HEK293 (cell line): ENCODE measurements at regions of chr10 and their contacts with region 1.

Region 1: DNA sequence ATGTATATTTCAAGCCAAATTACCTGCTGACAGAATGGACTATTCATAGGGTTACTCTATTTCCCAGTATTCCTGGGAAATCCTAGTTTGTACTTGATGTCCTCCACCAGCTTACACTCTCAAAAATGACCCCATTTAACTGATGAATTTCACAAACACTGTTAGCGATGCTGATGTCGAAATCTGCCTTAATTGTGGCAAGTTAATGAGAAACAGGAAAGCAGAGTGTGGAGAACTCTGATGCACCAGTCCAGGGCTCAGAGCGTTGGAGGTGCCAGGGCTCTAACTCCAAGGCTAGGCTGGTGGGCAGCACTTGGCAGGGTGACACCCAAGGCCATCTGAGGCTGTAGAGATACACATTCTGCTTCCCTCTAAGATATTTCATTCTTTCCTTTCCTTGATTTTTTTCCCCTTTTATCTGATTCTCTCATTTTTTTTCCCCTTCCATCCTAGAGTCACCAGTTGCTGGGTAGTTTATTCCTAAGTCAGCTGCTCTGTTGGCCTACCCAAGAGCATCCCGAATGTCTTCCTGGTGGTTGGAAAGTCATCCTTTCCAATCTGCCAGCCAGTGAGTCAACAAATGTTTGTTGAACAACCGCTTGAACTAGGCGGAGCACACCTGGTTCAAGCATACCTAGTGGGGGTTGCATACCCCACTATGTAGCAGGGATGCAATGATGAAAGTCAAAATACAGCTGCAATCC is 525.0 kb upstream of the NRP1 start:
- H3K4me3 ChIP-seq: no peak overlapping the region
- H3K27ac ChIP-seq: no peak overlapping the region
- H3K4me1 ChIP-seq: no peaks in the 10 kb centered on the region
- CTCF ChIP-seq: no peak

Region 2: DNA sequence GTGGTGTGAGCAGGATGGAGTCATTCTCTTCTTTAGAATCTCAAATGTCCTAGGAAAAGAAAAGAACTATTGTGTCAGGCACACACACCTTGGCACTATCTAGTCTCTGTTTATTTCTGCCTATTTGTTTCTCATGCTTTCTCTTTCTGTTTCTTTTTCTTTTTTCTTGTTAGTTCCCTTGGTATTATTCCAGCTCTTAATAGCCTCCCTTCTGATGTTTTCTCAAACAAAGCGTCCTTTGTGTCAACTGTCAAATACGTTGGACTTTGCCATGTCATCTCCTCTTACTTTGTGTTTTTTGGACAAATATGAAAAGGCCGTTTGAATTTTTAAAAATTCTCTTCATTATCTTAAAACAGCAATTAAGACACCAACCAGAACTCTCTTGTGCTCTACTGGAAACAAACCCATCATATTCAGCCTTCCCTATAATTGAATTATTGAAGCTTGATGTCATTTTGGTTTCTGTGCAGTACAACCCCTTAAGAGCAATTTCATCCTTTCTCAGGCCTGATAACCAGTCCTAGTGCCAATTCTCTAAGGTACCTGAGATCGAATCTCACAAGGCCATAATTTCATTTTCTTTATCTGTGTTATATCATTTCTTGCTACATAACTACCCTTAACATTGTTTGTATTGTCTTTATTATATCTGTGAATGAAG is 27.2 kb before region 1 on chr10:
- CTCF ChIA-PET with region 1: no interaction called
- POLR2A ChIA-PET with region 1: no interaction called
- H3K4me3 ChIP-seq: no peak overlapping the region
- H3K27ac ChIP-seq: no peak overlapping the region
- H3K4me1 ChIP-seq: no peaks in the 10 kb centered on the region
- CTCF ChIP-seq: no peak

Region 3: DNA sequence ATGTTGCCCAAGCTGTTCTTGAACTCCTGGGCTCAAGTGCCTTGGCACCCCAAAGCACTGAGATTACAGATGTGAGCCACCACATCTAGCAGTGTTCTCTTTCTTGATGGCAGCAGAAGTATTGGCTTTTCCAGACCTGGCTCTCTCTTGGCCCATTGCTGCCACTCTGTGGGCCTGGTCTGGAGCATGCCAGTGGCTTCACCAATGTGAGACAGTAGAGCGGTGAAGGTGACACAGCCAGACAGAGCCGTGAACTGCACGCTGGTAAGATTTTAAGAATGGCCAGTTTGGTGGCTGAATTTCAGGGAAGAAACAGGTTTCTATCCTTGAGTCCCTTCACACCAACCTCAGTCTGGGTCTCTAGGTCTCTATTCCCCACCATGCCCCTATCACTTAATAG is 27.7 kb after region 1 on chr10:
- CTCF ChIA-PET with region 1: no interaction called
- POLR2A ChIA-PET with region 1: no interaction called
- H3K4me3 ChIP-seq: no peak overlapping the region
- H3K27ac ChIP-seq: no peak overlapping the region
- H3K4me1 ChIP-seq: no peaks in the 10 kb centered on the region
- CTCF ChIP-seq: no peak

Region 4: GRCh38 chr10:34392641-34393170 is 533.2 kb after region 1 on chr10:
- CTCF ChIA-PET with region 1: no interaction called
- POLR2A ChIA-PET with region 1: interaction called, 10 read pairs
- H3K4me3 ChIP-seq: no peak overlapping the region
- H3K27ac ChIP-seq: no peak overlapping the region
- H3K4me1 ChIP-seq: peaks cover 3% of the 10 kb centered on the region; the same call in 1 of the 2 replicates
- CTCF ChIP-seq: no peak